Left colon (tissue), 2 donors: ENCODE measurements at regions of chr17 and their contacts with region 1.

Region 1: GRCh38 chr17:48618256-48618897 is 3.3 kb upstream of the HOXB8 start:
- DNase-seq: peak; percentile 87 to 91
- ATAC-seq: peak; percentile 52

Region 2: GRCh38 chr17:48333034-48333530 is 285.3 kb before region 1 on chr17:
- intact Hi-C with region 1: loop called in 1 of 2 experiments (anchors 5 kb)
- DNase-seq: no peak
- ATAC-seq: no peak

Region 3: GRCh38 chr17:48728232-48729231 is 110.2 kb after region 1 on chr17 and contains the start of gene HOXB13:
- intact Hi-C with region 1: no loop called
- DNase-seq: peak; percentile 89 to 93
- ATAC-seq: peak; percentile 73
- total RNA-seq, gene HOXB13: 39.4 to 88.0 TPM

Region 4: GRCh38 chr17:50394711-50395110 is 1776.3 kb after region 1 on chr17:
- intact Hi-C with region 1: no loop called
- DNase-seq: no peak
- ATAC-seq: no peak